Lower leg skin (tissue), 4 donors: ENCODE measurements at regions of chr2 and their contacts with region 1.

Region 1: GRCh38 chr2:68031542-68032160 is 31.2 kb downstream of the C1D start:
- DNase-seq: no peak
- H3K4me3 ChIP-seq: no peak overlapping the region
- CTCF ChIP-seq: no peak
- POLR2A ChIP-seq: no peak

Region 2: GRCh38 chr2:66429071-66429477 is 1602.6 kb before region 1 on chr2:
- intact Hi-C with region 1: loop called (anchors 10 kb)
- DNase-seq: no peak
- H3K4me3 ChIP-seq: no peak overlapping the region
- CTCF ChIP-seq: peak in 1 of 3 donors; percentile 18
- POLR2A ChIP-seq: no peak

Region 3: DNA sequence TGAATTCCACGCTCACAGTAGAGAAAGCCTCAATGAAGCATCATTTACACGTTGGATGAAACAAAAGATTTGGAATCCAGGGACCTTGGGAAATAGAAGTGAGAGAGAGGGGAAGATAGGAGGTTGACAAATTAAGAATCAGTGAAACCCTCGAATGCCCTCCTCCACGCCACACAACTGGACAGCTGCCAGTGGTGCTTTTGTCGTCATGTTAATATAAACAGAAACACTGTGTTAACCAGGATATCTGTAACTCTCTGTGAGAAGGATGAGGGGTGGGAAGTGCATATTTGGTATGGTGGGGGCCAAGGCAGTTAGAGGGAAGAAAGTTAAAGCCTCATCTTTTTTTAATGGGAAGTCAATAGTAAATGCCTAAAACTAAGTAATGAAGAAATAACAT is 1246.7 kb after region 1 on chr2:
- intact Hi-C with region 1: no loop called
- DNase-seq: no peak
- H3K4me3 ChIP-seq: no peak overlapping the region
- CTCF ChIP-seq: no peak
- POLR2A ChIP-seq: no peak